Transverse colon (tissue), 4 donors: ENCODE measurements at regions of chr3 and their contacts with region 1.

Region 1: GRCh38 chr3:46705022-46705530 is 3.9 kb downstream of the TMIE start:
- DNase-seq: peak; percentile 77
- H3K4me3 ChIP-seq: no peak overlapping the region
- H3K27ac ChIP-seq: no peak overlapping the region
- H3K4me1 ChIP-seq: peaks cover 0 to 15% (median 11%) of the 10 kb centered on the region in 4 donors
- H3K27me3 ChIP-seq: peaks cover 30% of the 10 kb centered on the region
- CTCF ChIP-seq: peak; percentile 93 to 98 (median 96)
- EP300 ChIP-seq: no peak
- POLR2A ChIP-seq: no peak

Region 2: GRCh38 chr3:46829699-46830208 is 124.7 kb after region 1 on chr3:
- in situ Hi-C with region 1: no loop called
- intact Hi-C with region 1: no loop called
- DNase-seq: no peak
- H3K4me3 ChIP-seq: no peak overlapping the region
- H3K27ac ChIP-seq: no peak overlapping the region
- H3K4me1 ChIP-seq: no peaks in the 10 kb centered on the region
- H3K27me3 ChIP-seq: no peaks in the 10 kb centered on the region
- CTCF ChIP-seq: no peak
- EP300 ChIP-seq: no peak
- POLR2A ChIP-seq: no peak

Region 3: GRCh38 chr3:46866720-46867549 is 161.9 kb after region 1 on chr3:
- in situ Hi-C with region 1: loop called in 1 of 4 experiments (anchors 25 kb)
- intact Hi-C with region 1: loop called (anchors 10 kb)
- DNase-seq: peak; percentile 84
- H3K4me3 ChIP-seq: no peak overlapping the region
- H3K27ac ChIP-seq: peak overlapping the region; percentile 36 to 60 (median 39)
- H3K4me1 ChIP-seq: peaks cover 13 to 20% (median 15%) of the 10 kb centered on the region in 4 donors
- H3K27me3 ChIP-seq: no peaks in the 10 kb centered on the region
- CTCF ChIP-seq: peak; percentile 88 to 95 (median 93)
- EP300 ChIP-seq: no peak
- POLR2A ChIP-seq: no peak

Region 4: DNA sequence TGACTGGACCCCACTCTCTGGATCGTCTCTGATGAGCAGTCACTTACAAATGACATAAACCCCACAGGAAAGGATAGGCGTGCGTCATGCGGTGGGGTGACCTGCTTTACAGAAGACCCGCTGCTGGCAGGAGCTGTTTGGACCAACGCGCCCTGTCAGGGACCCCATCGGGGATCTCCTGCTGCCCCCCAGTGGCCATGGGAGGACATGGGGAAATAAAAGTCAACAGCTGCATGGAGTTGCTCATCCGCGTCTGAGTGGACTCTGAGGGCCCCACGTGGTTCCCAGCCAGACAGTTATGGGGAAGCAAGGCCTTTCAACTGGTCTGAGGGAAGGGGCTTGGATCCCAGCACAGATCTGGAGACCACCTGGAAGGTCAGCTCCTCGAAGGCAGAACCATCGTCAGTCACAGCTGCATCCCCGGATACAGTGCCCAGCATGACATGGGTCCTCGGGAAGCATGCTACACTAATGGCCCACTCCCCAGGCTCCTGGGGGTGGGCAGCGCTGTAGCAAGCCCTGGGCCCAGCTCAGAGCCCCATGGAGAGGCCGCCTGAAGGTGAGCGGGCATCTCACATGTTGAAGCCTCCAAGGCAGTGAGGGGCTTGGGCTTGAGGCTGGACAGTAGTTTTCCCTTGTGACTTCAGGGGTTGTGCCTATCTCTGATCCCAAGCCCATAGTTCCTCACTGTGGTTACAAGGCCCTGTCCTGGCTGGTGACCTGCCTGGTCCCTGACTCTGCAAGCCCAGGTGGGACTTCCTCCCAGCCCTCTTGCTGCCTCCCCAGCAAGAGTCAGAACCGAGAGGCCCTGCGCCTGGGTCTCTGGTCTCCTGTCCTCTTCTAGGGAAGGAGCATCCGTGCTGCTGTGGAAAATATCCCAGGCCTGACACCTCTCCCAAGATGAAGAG is 204.7 kb after region 1 on chr3:
- in situ Hi-C with region 1: loop called in 1 of 4 experiments (anchors 10 kb)
- intact Hi-C with region 1: loop called (anchors 2 kb)
- DNase-seq: peak; percentile 79
- H3K4me3 ChIP-seq: no peak overlapping the region
- H3K27ac ChIP-seq: no peak overlapping the region
- H3K4me1 ChIP-seq: peaks cover 4 to 18% (median 13%) of the 10 kb centered on the region in 4 donors
- H3K27me3 ChIP-seq: no peaks in the 10 kb centered on the region
- CTCF ChIP-seq: peak; percentile 82 to 87 (median 85)
- EP300 ChIP-seq: no peak
- POLR2A ChIP-seq: no peak

Region 5: GRCh38 chr3:47009225-47010110 is 304.4 kb after region 1 on chr3:
- in situ Hi-C with region 1: loop called in 2 of 4 experiments (anchors 25 kb)
- intact Hi-C with region 1: no loop called
- DNase-seq: peak; percentile 85
- H3K4me3 ChIP-seq: peak overlapping the region; percentile 5 to 52 (median 44)
- H3K27ac ChIP-seq: peak overlapping the region; percentile 80 to 86 (median 83)
- H3K4me1 ChIP-seq: peaks cover 0 to 10% (median 3%) of the 10 kb centered on the region in 4 donors
- H3K27me3 ChIP-seq: no peaks in the 10 kb centered on the region
- CTCF ChIP-seq: no peak
- EP300 ChIP-seq: no peak
- POLR2A ChIP-seq: peak; percentile 59

Region 6: GRCh38 chr3:47324278-47324865 is 619.3 kb after region 1 on chr3:
- in situ Hi-C with region 1: loop called in 2 of 4 experiments (anchors 25 kb)
- intact Hi-C with region 1: loop called (anchors 5 kb)
- DNase-seq: peak; percentile 55
- H3K4me3 ChIP-seq: no peak overlapping the region
- H3K27ac ChIP-seq: no peak overlapping the region
- H3K4me1 ChIP-seq: no peaks in the 10 kb centered on the region
- H3K27me3 ChIP-seq: no peaks in the 10 kb centered on the region
- CTCF ChIP-seq: peak; percentile 57 to 67 (median 65)
- EP300 ChIP-seq: no peak
- POLR2A ChIP-seq: no peak

Region 7: DNA sequence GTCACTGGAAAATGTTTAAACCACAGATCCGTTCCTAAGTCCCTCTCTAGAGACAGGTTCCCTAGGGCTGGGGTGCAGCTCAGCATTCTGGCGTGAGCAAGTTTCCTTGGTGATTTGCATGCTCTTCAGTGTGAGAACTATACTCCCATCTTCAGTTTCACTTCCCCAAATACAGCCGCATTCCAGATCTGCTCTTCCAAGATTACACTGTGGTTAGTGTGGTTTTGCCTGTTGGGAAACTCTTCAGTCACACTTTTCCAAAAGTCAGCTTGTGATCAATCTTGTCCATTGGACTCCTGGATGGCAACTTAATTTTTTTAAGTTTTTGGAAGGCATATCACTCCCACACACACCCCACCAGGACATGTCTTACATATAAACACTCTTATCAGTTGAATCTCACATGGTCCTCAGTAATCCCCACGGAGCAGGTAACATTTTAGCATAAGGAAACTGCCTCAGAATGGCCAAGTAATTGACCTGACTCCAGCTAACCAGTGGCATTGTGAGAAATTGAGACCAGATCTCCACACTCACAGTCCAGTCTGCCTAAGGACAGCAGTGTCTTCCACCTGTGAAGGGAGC is 642.2 kb after region 1 on chr3:
- in situ Hi-C with region 1: loop called in 3 of 4 experiments (anchors 25 kb)
- intact Hi-C with region 1: no loop called
- DNase-seq: peak; percentile 18
- H3K4me3 ChIP-seq: no peak overlapping the region
- H3K27ac ChIP-seq: no peak overlapping the region
- H3K4me1 ChIP-seq: peaks cover 0 to 8% (median 0%) of the 10 kb centered on the region in 4 donors
- H3K27me3 ChIP-seq: no peaks in the 10 kb centered on the region
- CTCF ChIP-seq: no peak
- EP300 ChIP-seq: no peak
- POLR2A ChIP-seq: no peak

Region 8: GRCh38 chr3:47370887-47371697 is 666.0 kb after region 1 on chr3:
- in situ Hi-C with region 1: loop called in 1 of 4 experiments (anchors 25 kb)
- intact Hi-C with region 1: no loop called
- DNase-seq: peak; percentile 23
- H3K4me3 ChIP-seq: no peak overlapping the region
- H3K27ac ChIP-seq: no peak overlapping the region
- H3K4me1 ChIP-seq: peaks cover 0 to under 1% (median under 1%) of the 10 kb centered on the region in 4 donors
- H3K27me3 ChIP-seq: no peaks in the 10 kb centered on the region
- CTCF ChIP-seq: peak in 3 of 5 experiments; percentile 36 to 60 (median 49)
- EP300 ChIP-seq: no peak
- POLR2A ChIP-seq: no peak